ENCODE measurements at regions of chr2 and their contacts with region 1.

Region 1: DNA sequence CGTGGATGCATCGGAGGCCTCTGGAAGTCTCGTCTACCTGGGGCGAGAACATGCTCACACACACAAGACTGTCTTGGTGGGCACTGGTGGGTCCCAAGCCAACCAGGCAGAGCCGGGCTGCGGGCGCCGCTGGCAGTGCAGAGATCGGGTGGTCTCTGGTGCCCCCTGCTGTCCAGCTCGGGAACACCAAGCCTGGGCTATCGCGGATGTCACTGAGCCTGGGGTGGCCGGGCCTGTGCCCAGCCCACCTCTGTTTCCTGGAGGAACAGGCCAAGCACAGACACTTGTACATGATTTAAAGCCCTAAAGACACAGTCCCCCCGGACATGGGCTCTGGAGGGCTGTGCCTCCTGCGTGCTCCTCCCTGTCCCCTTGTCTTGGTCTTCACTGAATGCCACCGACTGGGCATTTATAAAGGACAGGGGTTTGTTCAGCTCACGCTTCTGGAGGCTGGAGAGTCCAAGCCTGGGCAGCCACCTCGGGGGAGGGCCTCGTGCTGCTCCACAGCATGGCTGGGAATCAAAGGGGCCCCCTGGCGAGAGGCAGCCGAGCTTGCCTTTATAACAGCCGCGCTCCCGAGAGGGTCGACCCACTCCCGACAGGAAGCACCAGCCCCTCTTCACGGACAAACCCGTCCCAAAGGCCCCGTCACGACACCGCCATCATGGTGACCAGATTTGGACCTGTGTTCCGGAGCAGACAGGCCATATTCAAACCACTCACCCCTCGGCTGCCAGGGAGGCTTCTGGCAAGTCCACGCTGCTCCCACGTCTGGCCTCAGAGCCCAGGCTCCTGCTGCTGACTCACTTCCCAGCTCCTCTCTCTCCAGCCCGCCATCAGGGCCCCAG is 3.6 kb upstream of the OTOS start:
- DNase-seq: peak; percentile 73
- ATAC-seq: peak; percentile 85 to 90

Region 2: DNA sequence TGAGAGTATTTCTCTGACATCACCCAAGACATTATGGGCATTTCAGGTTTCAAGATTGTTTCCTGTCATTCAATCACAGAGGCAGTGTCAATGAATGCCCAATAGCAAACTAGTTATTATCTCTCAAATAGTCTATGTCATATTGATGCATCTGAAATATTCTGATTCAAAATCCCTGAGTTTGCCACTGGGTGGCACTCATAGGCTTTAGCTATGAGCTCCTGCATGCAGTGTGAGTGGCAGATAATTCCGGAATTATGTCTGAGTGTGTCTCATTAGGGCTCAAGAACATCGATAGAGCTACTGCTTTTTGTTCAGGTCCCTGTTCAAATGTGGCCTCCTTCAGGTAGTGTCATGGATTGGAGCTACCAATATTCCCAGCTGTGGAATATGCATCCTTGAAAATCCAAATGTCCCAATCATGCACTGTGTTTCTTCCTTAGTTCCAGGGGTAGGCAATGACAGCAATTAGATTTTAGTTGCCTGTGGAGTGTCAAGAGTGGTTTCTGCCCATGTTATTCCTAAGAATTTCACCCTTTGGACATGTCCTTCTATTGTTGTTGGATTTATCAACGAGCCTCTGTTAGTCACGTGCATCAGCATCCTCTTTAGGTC is 82.9 kb before region 1 on chr2:
- intact Hi-C with region 1: loop called (anchors 2 to 5 kb)
- DNase-seq: no peak
- ATAC-seq: peak; percentile 57 to 63